Activated T-helper 2 cell treated with anti-CD3 and anti-CD28 coated beads, Interferon-gamma antibody, Interleukin-2, Interleukin-4, amounts not matched to agents 10 μg/mL and 5 μg/mL and 100 μg/mL, durations not matched to agents 14 hours and 24 hours and 36 hours (primary cell): ENCODE measurements at regions of chrX and their contacts with region 1.

Region 1: GRCh38 chrX:48021026-48021900 is 14.5 kb downstream of the SPACA5 start:
- DNase-seq: peak; percentile 24
- H3K4me3 Mint-ChIP-seq: peak overlapping the region; percentile 82
- H3K27ac Mint-ChIP-seq: peak overlapping the region; percentile 85
- H3K4me1 Mint-ChIP-seq: peaks cover 7% of the 10 kb centered on the region
- H3K27me3 Mint-ChIP-seq: no peaks in the 10 kb centered on the region

Region 2: GRCh38 chrX:47650164-47651042 is 370.9 kb before region 1 on chrX and contains the start of gene ELK1:
- intact Hi-C with region 1: loop called (anchors 10 kb)
- DNase-seq: peak; percentile 89
- H3K4me3 Mint-ChIP-seq: peak within 1 kb of the TSS; percentile 93
- H3K27ac Mint-ChIP-seq: peak within 1 kb of the TSS; percentile 97
- H3K4me1 Mint-ChIP-seq: peaks cover 50% of the 10 kb centered on the region
- H3K27me3 Mint-ChIP-seq: no peaks in the 10 kb centered on the region
- total RNA-seq, gene ELK1: 108 and 110 TPM in 2 replicates

Region 3: GRCh38 chrX:47836164-47837072 is 184.8 kb before region 1 on chrX and contains the start of gene ZNF81:
- intact Hi-C with region 1: loop called (anchors 1 kb)
- DNase-seq: peak; percentile 86
- H3K4me3 Mint-ChIP-seq: peak within 1 kb of the TSS; percentile 92
- H3K27ac Mint-ChIP-seq: peak within 1 kb of the TSS; percentile 97
- H3K4me1 Mint-ChIP-seq: peaks cover 13% of the 10 kb centered on the region
- H3K27me3 Mint-ChIP-seq: no peaks in the 10 kb centered on the region
- total RNA-seq, gene ZNF81: 6.1 and 8.1 TPM in 2 replicates

Region 4: DNA sequence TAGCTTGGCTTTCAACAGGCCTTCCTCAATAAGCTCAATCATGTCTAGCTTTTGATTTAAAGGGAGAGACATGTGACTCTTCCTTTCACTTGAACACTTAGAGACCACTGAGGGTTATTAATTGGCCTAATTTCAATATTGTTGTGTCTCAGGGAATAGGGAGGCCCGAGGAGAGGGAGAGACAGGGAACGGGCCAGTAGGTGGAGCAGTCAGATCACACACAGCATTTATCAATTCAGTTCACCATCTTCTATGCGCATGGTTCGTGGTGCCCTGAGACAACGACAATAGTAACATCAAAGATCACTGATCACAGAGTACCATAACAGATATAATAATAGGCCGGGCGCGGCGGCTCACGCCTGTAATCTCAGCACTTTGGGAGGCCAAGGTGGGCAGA is 166.8 kb before region 1 on chrX:
- intact Hi-C with region 1: loop called (anchors 1 kb)
- DNase-seq: no peak
- H3K4me3 Mint-ChIP-seq: no peak overlapping the region
- H3K27ac Mint-ChIP-seq: no peak overlapping the region
- H3K4me1 Mint-ChIP-seq: peaks cover 1% of the 10 kb centered on the region
- H3K27me3 Mint-ChIP-seq: no peaks in the 10 kb centered on the region

Region 5: DNA sequence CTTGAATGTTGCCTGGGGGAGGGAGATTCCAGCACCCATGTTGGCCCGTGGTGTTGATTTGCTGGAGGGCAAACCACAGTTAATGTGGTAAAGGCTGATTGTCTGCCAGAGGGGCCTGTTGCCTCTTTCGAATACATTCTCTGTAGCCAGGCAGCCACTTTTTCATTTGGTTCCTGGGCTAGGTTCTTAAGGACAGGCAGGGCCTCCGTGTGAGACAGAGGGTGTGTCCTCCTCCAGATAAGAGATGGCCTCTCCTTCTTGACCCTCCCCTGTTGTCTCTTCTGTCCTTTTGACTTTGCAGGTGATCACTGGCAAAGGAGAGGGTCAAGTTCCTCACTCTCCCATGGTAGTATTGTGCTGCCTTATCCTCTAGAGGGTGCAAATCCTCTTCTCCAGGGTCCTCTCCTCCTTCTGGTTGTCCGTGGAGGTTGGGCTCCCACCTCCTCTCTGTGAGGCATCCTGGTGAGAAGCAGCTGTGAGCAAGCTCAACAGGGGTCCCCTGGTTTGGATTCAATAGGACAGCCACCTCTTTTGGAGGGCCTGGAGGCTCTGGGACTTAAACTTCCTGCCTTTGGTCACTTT is 62.4 kb before region 1 on chrX:
- intact Hi-C with region 1: loop called (anchors 2 kb)
- DNase-seq: no peak
- H3K4me3 Mint-ChIP-seq: no peak overlapping the region
- H3K27ac Mint-ChIP-seq: no peak overlapping the region
- H3K4me1 Mint-ChIP-seq: no peaks in the 10 kb centered on the region
- H3K27me3 Mint-ChIP-seq: no peaks in the 10 kb centered on the region